ENCODE measurements at regions of chr1 and their contacts with region 1.

Region 1: DNA sequence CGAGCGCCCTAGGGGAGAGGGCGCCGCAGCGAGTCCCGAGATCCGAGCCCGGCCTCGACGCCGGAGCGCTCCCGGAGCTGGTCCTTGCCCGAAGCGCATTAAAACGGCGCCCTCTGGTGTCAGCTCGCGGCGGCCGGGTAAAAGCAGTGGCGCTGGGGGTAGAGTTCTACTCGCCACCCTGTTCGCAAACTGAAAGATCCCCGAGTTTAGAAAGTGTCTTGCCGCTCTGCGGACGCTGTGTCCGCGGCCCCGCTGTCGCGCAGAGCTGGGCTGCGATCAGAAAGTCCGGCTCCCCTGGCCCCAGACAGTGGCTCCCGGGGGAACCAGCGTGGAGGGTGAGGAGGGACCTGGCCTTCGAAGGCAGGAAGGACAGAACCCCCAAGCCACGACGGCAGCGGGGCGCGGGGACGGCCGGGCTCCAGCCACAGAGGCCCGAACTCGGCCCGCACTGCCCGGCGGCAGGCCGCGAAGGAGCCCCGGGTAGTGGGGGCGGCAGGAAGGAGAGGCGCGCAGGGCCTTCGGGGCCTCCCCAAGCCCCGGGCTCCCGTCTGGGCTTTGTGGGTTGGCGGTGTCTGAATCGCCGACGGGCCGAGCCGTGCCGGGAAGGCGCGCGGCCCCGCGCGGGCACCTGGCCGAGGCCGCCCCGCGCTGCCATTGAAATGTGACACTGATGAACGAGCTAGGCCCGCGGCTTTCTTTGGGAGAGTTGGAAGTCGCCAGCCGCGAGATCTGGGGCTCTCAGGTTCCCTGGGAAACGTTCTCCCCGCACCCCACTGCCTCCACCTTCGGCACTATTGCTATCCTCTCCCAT is 39.1 kb upstream of the NFIA start:
- DNase-seq: peak; percentile 94
- H3K4me3 ChIP-seq: peak overlapping the region; percentile 47 to 62 (median 58)
- H3K27ac ChIP-seq: peak overlapping the region; percentile 74 to 83 (median 76)
- H3K4me1 ChIP-seq: peaks cover 0 to 12% (median 4%) of the 10 kb centered on the region in 4 donors
- H3K27me3 ChIP-seq: no peaks in the 10 kb centered on the region
- CTCF ChIP-seq: peak; percentile 67 to 90 (median 86)
- EP300 ChIP-seq: no peak
- POLR2A ChIP-seq: no peak

Region 2: DNA sequence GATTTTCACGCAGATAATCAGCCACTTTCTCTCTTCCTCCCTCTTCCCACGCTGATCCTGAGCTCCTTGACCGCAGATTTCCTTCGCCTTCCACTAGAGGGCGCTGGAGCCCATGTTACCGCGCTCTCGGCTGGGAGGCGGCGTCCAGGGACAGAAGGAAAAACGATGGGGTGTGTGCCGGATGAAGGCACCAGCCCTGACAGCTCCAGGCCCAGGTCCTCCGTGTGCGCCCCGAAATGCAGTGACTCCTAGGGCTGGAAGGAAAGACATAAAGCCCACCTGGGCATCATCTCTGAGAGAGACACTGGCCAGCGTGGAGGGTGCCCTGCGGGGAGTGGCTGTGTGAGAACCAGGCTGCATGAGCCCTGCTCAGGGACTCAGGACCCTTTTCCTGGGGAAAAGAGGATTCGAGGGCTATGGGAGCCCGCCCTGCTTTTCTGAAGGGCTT is 1071.7 kb before region 1 on chr1:
- intact Hi-C with region 1: loop called (anchors 2 kb)
- DNase-seq: peak; percentile 77
- H3K4me3 ChIP-seq: no peak overlapping the region
- H3K27ac ChIP-seq: no peak overlapping the region
- H3K4me1 ChIP-seq: peaks cover 0 to 14% (median 7%) of the 10 kb centered on the region in 4 donors
- H3K27me3 ChIP-seq: no peaks in the 10 kb centered on the region
- CTCF ChIP-seq: peak; percentile 24 to 90 (median 78)
- EP300 ChIP-seq: no peak
- POLR2A ChIP-seq: no peak

Region 3: GRCh38 chr1:60848583-60849188 is 194.5 kb before region 1 on chr1:
- intact Hi-C with region 1: loop called (anchors 2 kb)
- DNase-seq: no peak
- H3K4me3 ChIP-seq: no peak overlapping the region
- H3K27ac ChIP-seq: no peak overlapping the region
- H3K4me1 ChIP-seq: peaks cover 0 to 5% (median 0%) of the 10 kb centered on the region in 4 donors
- H3K27me3 ChIP-seq: no peaks in the 10 kb centered on the region
- CTCF ChIP-seq: peak in 2 of 4 experiments; percentile 22 to 31
- EP300 ChIP-seq: no peak
- POLR2A ChIP-seq: no peak

Region 4: GRCh38 chr1:60969971-60970509 is 73.2 kb before region 1 on chr1:
- intact Hi-C with region 1: loop called (anchors 2 kb)
- DNase-seq: no peak
- H3K4me3 ChIP-seq: no peak overlapping the region
- H3K27ac ChIP-seq: peak overlapping the region in 3 of 4 donors; percentile 5 to 22 (median 9)
- H3K4me1 ChIP-seq: peaks cover 0 to 22% (median 11%) of the 10 kb centered on the region in 4 donors
- H3K27me3 ChIP-seq: no peaks in the 10 kb centered on the region
- CTCF ChIP-seq: peak; percentile 22 to 45 (median 38)
- EP300 ChIP-seq: no peak
- POLR2A ChIP-seq: no peak

Measured in sigmoid colon (tissue), 7 donors.